Activated CD4-positive, alpha-beta T cell treated with anti-CD3 and anti-CD28 coated beads, Interleukin-2, amount 10 ng/mL, durations not matched to agents 24 days and 14 days (primary cell): ENCODE measurements at regions of chr6 and their contacts with region 1.

Region 1: GRCh38 chr6:149235130-149235561 is 82.4 kb upstream of the TAB2 start:
- DNase-seq: no peak
- H3K4me3 Mint-ChIP-seq: peak overlapping the region; percentile 74
- H3K27ac Mint-ChIP-seq: peak overlapping the region; percentile 98
- H3K4me1 Mint-ChIP-seq: peaks cover 53% of the 10 kb centered on the region
- H3K27me3 Mint-ChIP-seq: no peaks in the 10 kb centered on the region

Region 2: DNA sequence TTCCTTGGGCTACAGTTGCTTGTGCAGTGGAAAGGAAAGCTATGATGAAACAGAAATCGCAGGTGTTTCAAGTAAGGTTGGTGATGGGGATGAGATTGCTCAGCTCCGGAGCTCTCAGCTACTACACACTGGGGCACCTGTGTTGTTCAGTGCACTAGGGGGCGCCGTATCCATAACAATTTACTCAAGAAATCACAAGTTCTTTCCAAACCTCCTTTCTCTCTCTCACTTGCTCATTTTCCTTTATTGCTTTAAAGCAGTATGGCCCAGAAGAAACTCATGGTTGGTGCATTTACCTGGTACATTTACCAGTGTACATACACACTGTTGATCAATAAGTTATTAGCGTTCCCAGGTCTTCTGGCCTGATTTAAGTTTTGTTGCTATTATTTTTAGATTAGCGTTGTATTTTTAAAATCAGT is 152.8 kb before region 1 on chr6:
- intact Hi-C with region 1: loop called (anchors 1 kb)
- DNase-seq: peak; percentile 96
- H3K4me3 Mint-ChIP-seq: peak overlapping the region; percentile 69
- H3K27ac Mint-ChIP-seq: peak overlapping the region; percentile 92
- H3K4me1 Mint-ChIP-seq: peaks cover 76% of the 10 kb centered on the region
- H3K27me3 Mint-ChIP-seq: no peaks in the 10 kb centered on the region

Region 3: GRCh38 chr6:149140137-149140909 is 94.8 kb before region 1 on chr6:
- intact Hi-C with region 1: loop called (anchors 1 kb)
- DNase-seq: peak; percentile 87
- H3K4me3 Mint-ChIP-seq: peak overlapping the region; percentile 85
- H3K27ac Mint-ChIP-seq: peak overlapping the region; percentile 100
- H3K4me1 Mint-ChIP-seq: peaks cover 48% of the 10 kb centered on the region
- H3K27me3 Mint-ChIP-seq: no peaks in the 10 kb centered on the region

Region 4: DNA sequence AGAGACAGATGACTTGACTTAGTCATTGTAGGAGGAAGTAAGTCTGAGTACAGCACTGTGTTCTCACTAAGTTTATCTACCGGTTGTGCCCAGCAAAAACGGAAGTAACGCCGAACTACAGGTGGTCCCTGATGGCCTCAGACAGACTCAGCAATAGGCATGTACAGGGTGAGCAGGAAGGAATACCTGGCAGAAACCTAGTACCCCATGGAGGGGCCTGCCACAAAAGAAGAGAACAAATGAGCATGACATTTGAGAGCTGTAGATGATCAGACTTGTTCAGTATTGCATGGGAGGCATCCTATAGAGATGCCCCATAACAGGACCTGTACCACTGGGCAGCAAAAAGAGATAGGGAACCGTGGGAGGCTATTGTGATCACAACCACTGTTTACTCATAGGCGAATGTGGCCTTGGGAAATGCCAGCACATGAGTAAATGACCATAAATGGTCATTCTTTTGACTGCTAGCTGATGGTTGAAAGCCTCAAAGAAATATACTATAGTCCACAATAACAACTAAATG is 24.0 kb before region 1 on chr6:
- intact Hi-C with region 1: loop called (anchors 1 kb)
- DNase-seq: peak; percentile 74
- H3K4me3 Mint-ChIP-seq: no peak overlapping the region
- H3K27ac Mint-ChIP-seq: no peak overlapping the region
- H3K4me1 Mint-ChIP-seq: peaks cover 29% of the 10 kb centered on the region
- H3K27me3 Mint-ChIP-seq: no peaks in the 10 kb centered on the region

Region 5: GRCh38 chr6:149246691-149247384 is 11.7 kb after region 1 on chr6:
- intact Hi-C with region 1: loop called (anchors 2 kb)
- DNase-seq: no peak
- H3K4me3 Mint-ChIP-seq: peak overlapping the region; percentile 50
- H3K27ac Mint-ChIP-seq: peak overlapping the region; percentile 75
- H3K4me1 Mint-ChIP-seq: peaks cover 38% of the 10 kb centered on the region
- H3K27me3 Mint-ChIP-seq: no peaks in the 10 kb centered on the region

Region 6: DNA sequence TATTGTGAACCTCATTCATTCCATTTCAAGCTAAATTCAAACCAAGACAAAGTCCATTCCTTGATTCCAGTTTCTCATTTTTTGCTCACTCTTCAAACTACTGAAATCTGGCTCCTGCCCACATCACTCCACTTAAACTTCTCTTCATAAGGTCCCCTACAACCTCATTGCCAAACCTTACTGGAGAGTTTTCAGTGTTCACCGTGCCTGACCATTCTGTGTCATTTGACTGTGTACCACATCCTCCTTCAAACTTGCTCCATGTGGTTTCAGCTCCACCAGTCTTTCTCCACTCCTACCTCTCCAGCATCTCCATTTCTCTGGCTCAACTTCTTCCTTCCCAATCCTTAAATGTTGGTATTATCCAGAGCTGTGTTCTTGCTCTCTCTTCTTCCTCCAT is 43.9 kb after region 1 on chr6:
- intact Hi-C with region 1: no loop called
- DNase-seq: peak; percentile 58
- H3K4me3 Mint-ChIP-seq: no peak overlapping the region
- H3K27ac Mint-ChIP-seq: no peak overlapping the region
- H3K4me1 Mint-ChIP-seq: peaks cover 27% of the 10 kb centered on the region
- H3K27me3 Mint-ChIP-seq: no peaks in the 10 kb centered on the region

Region 7: GRCh38 chr6:149335924-149336608 is 100.9 kb after region 1 on chr6:
- intact Hi-C with region 1: loop called (anchors 2 kb)
- DNase-seq: peak; percentile 72
- H3K4me3 Mint-ChIP-seq: peak overlapping the region; percentile 74
- H3K27ac Mint-ChIP-seq: peak overlapping the region; percentile 87
- H3K4me1 Mint-ChIP-seq: peaks cover 69% of the 10 kb centered on the region
- H3K27me3 Mint-ChIP-seq: no peaks in the 10 kb centered on the region

Region 8: DNA sequence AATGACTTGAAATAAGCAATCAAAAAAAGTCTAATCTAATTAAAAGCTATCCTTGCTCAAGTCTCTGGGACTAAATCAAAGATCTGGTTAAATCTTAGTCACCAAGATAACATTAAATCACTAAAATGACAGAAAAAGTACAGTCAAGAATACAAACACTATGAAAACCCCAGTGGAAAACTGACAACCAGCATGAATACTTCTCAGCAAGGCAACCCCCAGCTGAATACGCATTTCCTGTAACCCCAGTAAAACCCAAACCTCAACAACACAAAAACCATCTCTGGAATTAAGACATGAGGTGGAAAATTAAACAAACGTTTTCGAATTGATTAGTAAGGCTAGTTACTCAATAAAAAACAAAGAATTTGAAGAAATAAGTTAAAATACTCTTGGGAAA is 273.3 kb after region 1 on chr6:
- intact Hi-C with region 1: loop called (anchors 1 kb)
- DNase-seq: peak; percentile 83
- H3K4me3 Mint-ChIP-seq: peak overlapping the region; percentile 33
- H3K27ac Mint-ChIP-seq: peak overlapping the region; percentile 92
- H3K4me1 Mint-ChIP-seq: peaks cover 41% of the 10 kb centered on the region
- H3K27me3 Mint-ChIP-seq: no peaks in the 10 kb centered on the region